ENCODE measurements at regions of chrX and their contacts with region 1.

Region 1: GRCh38 chrX:118603981-118604380 is 108.4 kb downstream of the DOCK11 start:
- DNase-seq: peak; percentile 10
- H3K4me3 ChIP-seq: no peak overlapping the region
- H3K27ac ChIP-seq: no peak overlapping the region
- H3K27me3 ChIP-seq: no peaks in the 10 kb centered on the region
- CTCF ChIP-seq: peak; percentile 79

Region 2: GRCh38 chrX:118459494-118459893 is 144.5 kb before region 1 on chrX:
- CTCF ChIA-PET with region 1: interaction called, 146 read pairs
- POLR2A ChIA-PET with region 1: interaction called, 3 read pairs
- DNase-seq: no peak
- H3K4me3 ChIP-seq: no peak overlapping the region
- H3K27ac ChIP-seq: no peak overlapping the region
- H3K27me3 ChIP-seq: no peaks in the 10 kb centered on the region
- CTCF ChIP-seq: peak; percentile 69

Region 3: DNA sequence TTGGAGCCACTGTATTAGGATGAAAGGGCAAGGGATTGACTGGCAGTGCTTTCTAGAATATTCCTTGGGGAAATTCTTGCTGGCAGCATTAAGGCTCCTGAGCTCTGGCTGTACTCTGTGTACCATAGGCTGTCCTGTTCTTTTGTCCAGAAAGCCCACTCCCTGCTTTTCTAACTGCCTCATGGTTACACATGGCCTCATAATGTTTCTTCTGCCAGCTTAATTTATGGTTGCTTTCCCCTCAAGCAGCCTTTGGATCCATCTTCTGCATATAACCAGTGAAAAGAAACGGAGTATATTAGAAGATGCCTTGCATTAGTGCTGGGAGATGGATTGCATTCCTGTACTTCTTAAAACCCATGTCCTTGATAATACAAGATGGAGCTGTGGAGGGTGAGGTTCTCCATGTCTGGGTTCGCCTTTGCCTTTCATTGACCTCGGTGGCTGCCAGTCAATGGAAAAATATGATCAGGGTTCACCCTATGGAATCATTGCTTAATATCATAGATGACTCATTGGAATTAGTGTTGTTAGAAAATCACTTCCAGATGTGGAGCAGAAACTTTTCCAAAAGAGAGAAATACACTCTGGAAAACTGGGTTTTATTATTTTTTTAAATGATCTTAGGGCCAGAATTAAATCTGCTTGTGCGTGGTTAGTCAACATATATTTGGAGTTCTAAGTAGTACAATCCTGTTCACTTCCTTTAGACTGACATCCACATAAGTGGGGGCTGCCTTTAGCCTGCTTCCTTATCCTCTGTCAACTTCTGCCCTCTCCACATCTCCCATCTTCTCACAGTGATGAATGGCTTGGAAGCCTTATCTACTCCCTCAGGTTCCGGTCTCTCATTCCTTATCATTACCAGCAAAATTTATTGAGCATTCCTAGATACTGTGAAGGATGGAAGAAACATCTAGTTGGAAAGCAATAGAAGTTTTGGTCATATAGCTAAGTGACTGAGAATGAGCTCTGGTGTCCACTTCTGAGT is 83.5 kb before region 1 on chrX:
- CTCF ChIA-PET with region 1: interaction called, 10 read pairs
- POLR2A ChIA-PET with region 1: no interaction called
- DNase-seq: peak; percentile 38
- H3K4me3 ChIP-seq: no peak overlapping the region
- H3K27ac ChIP-seq: peak overlapping the region; percentile 84
- H3K27me3 ChIP-seq: no peaks in the 10 kb centered on the region
- CTCF ChIP-seq: no peak

Region 4: DNA sequence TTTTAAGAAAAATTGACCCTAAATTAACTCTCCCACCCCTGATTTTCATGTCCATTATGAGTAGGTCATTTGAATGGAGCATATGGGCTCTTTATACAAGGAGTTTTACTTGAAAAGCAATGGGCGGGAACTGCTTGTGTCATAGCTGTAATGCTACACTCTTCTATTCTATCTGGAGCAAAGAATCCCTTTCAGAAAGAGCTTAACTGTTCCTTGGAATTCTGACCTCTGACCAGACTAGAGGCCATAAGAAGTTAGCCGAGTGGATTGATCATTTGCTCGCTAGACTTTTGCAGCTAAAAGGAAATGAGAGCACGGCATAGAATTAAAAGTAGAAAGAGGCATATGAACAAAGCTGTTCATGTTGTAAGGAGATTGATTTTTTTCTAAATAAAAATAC is 29.3 kb before region 1 on chrX:
- CTCF ChIA-PET with region 1: interaction called, 11 read pairs
- POLR2A ChIA-PET with region 1: no interaction called
- DNase-seq: no peak
- H3K4me3 ChIP-seq: no peak overlapping the region
- H3K27ac ChIP-seq: no peak overlapping the region
- H3K27me3 ChIP-seq: no peaks in the 10 kb centered on the region
- CTCF ChIP-seq: no peak

Region 5: DNA sequence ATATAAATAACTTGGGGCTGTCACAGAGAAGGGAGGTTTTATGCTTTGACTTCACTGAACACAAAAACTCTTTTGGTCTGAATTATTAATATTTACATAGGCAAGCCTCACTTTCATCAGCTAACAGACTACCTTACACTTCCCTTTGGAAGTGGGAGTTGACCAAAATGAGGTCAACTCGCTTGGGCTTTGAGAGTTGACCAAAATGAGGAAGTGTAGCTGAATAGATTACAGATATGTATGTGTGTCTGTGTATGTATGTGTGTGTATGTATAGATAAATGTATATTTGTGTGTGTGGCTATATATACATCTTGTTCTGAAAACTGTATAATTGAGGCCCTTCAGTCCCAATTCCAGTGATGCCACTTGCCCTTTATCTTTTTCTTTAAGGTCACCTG is 10.2 kb after region 1 on chrX:
- CTCF ChIA-PET with region 1: interaction called, 21 read pairs
- POLR2A ChIA-PET with region 1: no interaction called
- DNase-seq: no peak
- H3K4me3 ChIP-seq: no peak overlapping the region
- H3K27ac ChIP-seq: no peak overlapping the region
- H3K27me3 ChIP-seq: no peaks in the 10 kb centered on the region
- CTCF ChIP-seq: no peak

Region 6: GRCh38 chrX:118807151-118808017 is 203.4 kb after region 1 on chrX:
- CTCF ChIA-PET with region 1: interaction called, 6 read pairs
- POLR2A ChIA-PET with region 1: interaction called, 12 read pairs
- DNase-seq: no peak
- H3K4me3 ChIP-seq: no peak overlapping the region
- H3K27ac ChIP-seq: no peak overlapping the region
- H3K27me3 ChIP-seq: no peaks in the 10 kb centered on the region
- CTCF ChIP-seq: peak; percentile 70

Measured in AG04450 (cell line).